ENCODE measurements at regions of chr6 and their contacts with region 1.

Region 1: DNA sequence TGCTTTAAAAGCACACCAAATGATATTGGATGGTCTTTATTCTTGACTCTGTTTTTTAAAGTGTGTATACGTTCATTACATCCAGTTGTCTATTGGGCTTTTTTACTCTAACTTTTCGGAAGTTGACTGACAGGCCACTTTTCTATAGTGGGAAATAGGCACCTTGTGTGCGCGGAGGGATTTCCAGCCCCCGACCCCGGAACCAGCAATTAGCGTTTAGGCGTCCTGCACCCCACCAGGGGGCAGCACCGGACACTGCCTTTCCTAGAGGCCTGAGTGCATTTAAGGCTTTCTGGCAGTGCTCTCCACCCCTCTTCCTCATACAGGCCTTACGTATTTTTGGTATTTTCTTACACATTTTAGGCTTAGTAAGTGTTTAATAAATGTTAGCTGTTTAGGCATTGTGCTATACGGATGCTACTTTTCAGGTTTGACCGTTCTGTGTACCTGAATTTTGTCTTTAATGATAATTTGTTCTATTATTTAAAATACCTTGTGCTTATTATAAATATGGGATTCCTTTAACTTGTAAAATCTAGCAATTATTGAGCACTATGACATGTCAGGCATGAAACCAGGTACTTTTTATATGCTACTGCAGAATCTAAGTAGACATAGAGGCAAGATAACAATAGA is 231.8 kb downstream of the BCKDHB start:
- DNase-seq: peak; percentile 63
- H3K4me3 Mint-ChIP-seq: no peak overlapping the region
- H3K27ac Mint-ChIP-seq: no peak overlapping the region
- H3K4me1 Mint-ChIP-seq: no peaks in the 10 kb centered on the region
- H3K27me3 Mint-ChIP-seq: no peaks in the 10 kb centered on the region
- CTCF ChIP-seq: peak; percentile 55

Region 2: GRCh38 chr6:80133020-80133419 is 205.3 kb before region 1 on chr6:
- CTCF ChIA-PET with region 1: no interaction called
- POLR2A ChIA-PET with region 1: interaction called, 4 read pairs
- intact Hi-C with region 1: loop called (anchors 10 kb)
- DNase-seq: peak; percentile 75
- H3K4me3 Mint-ChIP-seq: no peak overlapping the region
- H3K27ac Mint-ChIP-seq: no peak overlapping the region
- H3K4me1 Mint-ChIP-seq: peaks cover 18% of the 10 kb centered on the region
- H3K27me3 Mint-ChIP-seq: no peaks in the 10 kb centered on the region
- CTCF ChIP-seq: peak; percentile 70

Region 3: DNA sequence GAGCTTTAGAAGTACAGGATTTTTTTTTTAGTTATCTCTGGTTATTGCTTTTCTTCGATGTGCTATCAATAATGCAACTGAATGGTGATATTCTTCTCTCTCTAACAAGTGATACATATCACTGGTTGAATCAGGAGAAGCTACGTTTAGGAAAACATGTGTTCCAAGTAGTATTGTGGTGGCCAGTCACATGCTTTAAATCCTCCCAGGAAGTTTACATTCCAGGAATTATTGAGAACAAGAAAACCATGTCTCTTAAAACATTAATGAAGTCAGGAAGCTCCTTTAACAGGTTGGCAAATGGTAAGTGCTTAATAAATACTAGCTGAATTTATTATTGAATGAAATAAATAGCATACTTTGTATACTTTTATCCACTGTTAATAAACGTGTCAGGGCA is 139.3 kb after region 1 on chr6:
- CTCF ChIA-PET with region 1: no interaction called
- POLR2A ChIA-PET with region 1: no interaction called
- intact Hi-C with region 1: loop called (anchors 10 kb)
- DNase-seq: no peak
- H3K4me3 Mint-ChIP-seq: no peak overlapping the region
- H3K27ac Mint-ChIP-seq: no peak overlapping the region
- H3K4me1 Mint-ChIP-seq: peaks cover 6% of the 10 kb centered on the region
- H3K27me3 Mint-ChIP-seq: no peaks in the 10 kb centered on the region
- CTCF ChIP-seq: no peak

Region 4: DNA sequence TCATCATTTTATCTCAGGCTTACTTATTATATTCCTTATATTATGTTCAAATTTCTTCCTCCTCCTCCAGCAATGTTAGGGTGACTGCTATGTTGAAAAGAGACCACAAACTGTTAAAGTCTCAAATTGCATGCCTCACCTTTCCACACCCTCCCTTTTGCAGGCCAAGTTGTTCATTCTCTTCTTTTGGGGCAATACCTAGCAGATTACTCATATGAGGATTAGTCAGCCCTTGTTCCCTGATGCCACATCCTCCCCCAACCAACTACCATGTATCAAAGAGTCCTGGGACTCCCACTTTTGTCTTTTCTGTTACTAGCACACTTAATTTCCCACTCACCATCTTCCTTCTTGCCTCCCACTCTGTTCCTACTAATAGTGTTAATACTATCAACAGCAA is 202.9 kb after region 1 on chr6:
- CTCF ChIA-PET with region 1: interaction called, 3 read pairs
- POLR2A ChIA-PET with region 1: no interaction called
- intact Hi-C with region 1: loop called (anchors 10 kb)
- DNase-seq: peak; percentile 94
- H3K4me3 Mint-ChIP-seq: peak overlapping the region; percentile 32
- H3K27ac Mint-ChIP-seq: peak overlapping the region; percentile 68
- H3K4me1 Mint-ChIP-seq: peaks cover 86% of the 10 kb centered on the region
- H3K27me3 Mint-ChIP-seq: no peaks in the 10 kb centered on the region
- CTCF ChIP-seq: no peak